Endothelial cell of umbilical vein (primary cell): ENCODE measurements at regions of chr10 and their contacts with region 1.

Region 1: GRCh38 chr10:31947144-31947926 is 18.7 kb upstream of the ARHGAP12 start:
- DNase-seq: peak; percentile 83
- H3K4me3 ChIP-seq: no peak overlapping the region
- H3K27ac ChIP-seq: peak overlapping the region; percentile 62
- H3K4me1 ChIP-seq: peaks cover 31% of the 10 kb centered on the region
- H3K27me3 ChIP-seq: no peaks in the 10 kb centered on the region
- CTCF ChIP-seq: peak; percentile 33 to 48
- POLR2A ChIP-seq: no peak

Region 2: DNA sequence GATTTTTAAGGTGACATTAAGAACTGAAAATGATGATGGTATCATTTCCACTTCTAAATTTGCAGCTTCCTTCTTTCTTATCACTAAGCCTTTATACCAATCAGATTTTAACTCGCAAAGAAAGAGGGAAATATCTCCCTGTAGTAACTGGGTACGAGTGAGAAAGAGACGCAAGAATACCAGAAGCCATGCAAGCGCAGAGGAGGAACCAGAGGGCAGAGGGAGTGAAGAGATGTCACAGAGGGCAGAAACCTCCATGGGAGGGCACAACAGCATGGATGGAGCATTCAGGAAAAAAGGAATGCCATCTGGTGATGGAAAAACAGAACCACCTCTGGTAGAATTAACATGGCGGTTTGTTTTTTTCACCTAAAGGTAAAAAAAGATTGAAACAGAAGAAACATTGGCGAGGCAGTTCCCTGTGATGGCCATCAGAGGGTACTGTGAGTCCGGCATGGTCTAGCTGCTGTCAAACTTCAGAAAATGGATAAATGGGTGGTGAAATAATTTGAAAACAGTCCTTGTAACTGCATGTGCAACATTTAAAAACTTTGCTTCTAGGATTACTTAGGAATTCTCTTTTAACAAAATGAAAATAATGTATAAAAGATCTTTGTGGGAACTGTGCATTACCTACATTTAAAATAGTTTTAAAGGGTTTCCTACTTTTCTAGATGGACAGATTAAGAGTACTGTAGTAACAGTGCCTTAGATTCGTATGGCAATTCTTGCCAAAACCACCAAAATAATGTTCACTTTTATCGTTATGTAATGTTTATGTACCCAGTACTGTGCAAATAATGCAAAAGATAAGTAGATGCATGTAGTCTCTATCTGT is 110.5 kb before region 1 on chr10:
- CTCF ChIA-PET with region 1: interaction called, 4 read pairs
- POLR2A ChIA-PET with region 1: no interaction called
- dilution Hi-C with region 1: no loop called
- intact Hi-C with region 1: loop called (anchors 1 kb)
- DNase-seq: peak; percentile 44
- H3K4me3 ChIP-seq: no peak overlapping the region
- H3K27ac ChIP-seq: no peak overlapping the region
- H3K4me1 ChIP-seq: peaks cover 8% of the 10 kb centered on the region
- H3K27me3 ChIP-seq: no peaks in the 10 kb centered on the region
- CTCF ChIP-seq: peak; percentile 65 to 67
- POLR2A ChIP-seq: no peak

Region 3: GRCh38 chr10:31905586-31905985 is 41.7 kb before region 1 on chr10:
- CTCF ChIA-PET with region 1: no interaction called
- POLR2A ChIA-PET with region 1: no interaction called
- dilution Hi-C with region 1: no loop called
- intact Hi-C with region 1: loop called (anchors 2 kb)
- DNase-seq: peak; percentile 53
- H3K4me3 ChIP-seq: no peak overlapping the region
- H3K27ac ChIP-seq: peak overlapping the region; percentile 10
- H3K4me1 ChIP-seq: peaks cover 14% of the 10 kb centered on the region
- H3K27me3 ChIP-seq: no peaks in the 10 kb centered on the region
- CTCF ChIP-seq: no peak
- POLR2A ChIP-seq: no peak

Region 4: DNA sequence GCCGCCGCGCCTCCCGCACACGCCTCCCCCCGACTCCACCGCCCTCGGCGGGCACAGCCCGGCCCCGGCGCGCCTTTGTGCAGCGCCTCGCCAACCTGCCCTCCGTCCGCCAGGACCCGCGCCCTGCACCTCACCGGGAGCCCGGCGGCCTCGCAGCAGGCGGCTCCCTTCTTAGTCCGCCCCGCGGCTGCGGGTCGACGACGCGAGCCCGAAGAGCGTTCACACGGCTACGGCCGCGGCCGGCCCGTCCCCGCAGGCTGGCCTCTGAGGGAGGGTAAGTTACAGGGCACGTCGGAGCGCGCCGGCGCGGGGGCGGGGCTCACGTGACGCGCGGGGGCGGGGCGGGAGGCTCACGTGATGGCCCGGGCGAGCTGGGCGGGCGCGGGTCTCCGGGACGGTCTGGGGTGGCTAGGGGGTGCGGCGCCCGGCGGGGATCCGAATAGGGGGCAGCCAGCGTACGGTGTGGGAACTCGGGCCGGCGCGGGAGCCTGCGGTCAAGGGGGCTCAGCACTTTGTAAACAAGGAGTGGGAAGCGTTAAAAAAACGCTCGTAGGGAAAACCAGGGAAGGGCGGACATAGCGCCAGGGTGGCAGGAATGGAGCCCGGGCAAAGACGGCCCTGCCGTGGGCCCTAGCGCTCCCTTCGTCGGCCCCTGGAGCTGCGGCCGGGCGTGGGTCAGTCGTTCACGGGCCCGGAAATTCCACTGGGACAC is 18.6 kb before region 1 on chr10 and contains the start of gene ARHGAP12:
- CTCF ChIA-PET with region 1: interaction called, 37 read pairs
- POLR2A ChIA-PET with region 1: no interaction called
- dilution Hi-C with region 1: no loop called
- intact Hi-C with region 1: loop called (anchors 1 kb)
- DNase-seq: peak; percentile 89
- H3K4me3 ChIP-seq: peak within 1 kb of the TSS; percentile 74 to 90 (median 80)
- H3K27ac ChIP-seq: peak within 1 kb of the TSS; percentile 70
- H3K4me1 ChIP-seq: peaks cover 26% of the 10 kb centered on the region
- H3K27me3 ChIP-seq: no peaks in the 10 kb centered on the region
- CTCF ChIP-seq: no peak
- POLR2A ChIP-seq: peak; percentile 54
- total RNA-seq, gene ARHGAP12: 19.2 and 19.3 TPM in 2 replicates

Region 5: DNA sequence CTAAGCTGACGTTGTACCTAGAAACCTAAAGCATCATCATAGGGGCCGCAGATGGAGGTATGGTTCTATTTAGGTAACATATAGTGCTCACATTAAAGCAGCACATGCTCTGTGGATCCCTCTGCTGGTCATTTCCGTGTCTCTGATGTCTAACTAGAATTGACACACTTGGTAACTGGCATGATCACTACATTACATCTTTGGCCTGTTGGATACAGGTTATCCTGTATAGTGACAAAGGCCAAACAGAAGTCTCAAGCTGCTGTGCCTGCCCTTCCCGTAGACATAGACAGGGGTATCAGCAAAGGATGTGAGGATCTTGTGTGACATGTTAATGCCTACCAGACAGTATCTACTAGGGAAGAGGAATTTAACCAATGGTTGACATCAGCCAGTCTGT is 57.7 kb after region 1 on chr10:
- CTCF ChIA-PET with region 1: no interaction called
- POLR2A ChIA-PET with region 1: no interaction called
- dilution Hi-C with region 1: no loop called
- intact Hi-C with region 1: loop called (anchors 5 kb)
- DNase-seq: peak; percentile 57
- H3K4me3 ChIP-seq: no peak overlapping the region
- H3K27ac ChIP-seq: no peak overlapping the region
- H3K4me1 ChIP-seq: no peaks in the 10 kb centered on the region
- H3K27me3 ChIP-seq: no peaks in the 10 kb centered on the region
- CTCF ChIP-seq: peak; percentile 41 to 55
- POLR2A ChIP-seq: no peak